Right ventricle myocardium inferior (tissue), 1 donor: ENCODE measurements at regions of chr17 and their contacts with region 1.

Region 1: GRCh38 chr17:61551255-61551742 is 39.7 kb downstream of the NACA2 start:
- DNase-seq: no peak
- ATAC-seq: no peak

Region 2: GRCh38 chr17:60720763-60721531 is 830.4 kb before region 1 on chr17:
- intact Hi-C with region 1: loop called (anchors 5 kb)
- DNase-seq: no peak
- ATAC-seq: no peak

Region 3: GRCh38 chr17:61593426-61593825 is 42.1 kb after region 1 on chr17:
- intact Hi-C with region 1: no loop called
- DNase-seq: no peak
- ATAC-seq: no peak